PC-9 (cell line): ENCODE measurements at regions of chr18 and their contacts with region 1.

Region 1: DNA sequence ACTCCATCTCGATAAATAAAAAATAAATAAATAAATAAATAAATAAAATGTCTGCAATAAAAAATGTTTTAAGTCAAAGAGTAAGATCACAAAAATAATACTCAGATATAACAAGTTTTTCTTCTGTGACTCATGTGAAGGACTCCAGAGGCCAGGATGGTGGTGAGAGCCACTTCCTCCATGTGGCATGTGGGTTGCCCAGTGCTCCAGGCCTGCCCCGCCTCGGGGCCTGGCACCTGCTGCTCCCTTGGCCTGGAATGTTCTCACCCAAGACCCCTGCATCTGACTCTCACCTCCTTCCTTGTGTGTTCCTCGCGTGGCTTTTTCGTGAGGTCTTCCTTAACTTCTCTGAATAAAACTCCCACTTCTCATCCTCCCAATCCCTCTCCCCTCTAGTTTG is 77.4 kb upstream of the LDLRAD4 start:
- DNase-seq: no peak
- H3K4me3 ChIP-seq: no peak overlapping the region
- H3K27ac ChIP-seq: no peak overlapping the region
- H3K4me1 ChIP-seq: 0 out of 2 replicates have a peak, but pooled peaks cover 14% of the 10 kb centered on the region
- H3K27me3 ChIP-seq: peaks cover 28% of the 10 kb centered on the region
- CTCF ChIP-seq: no peak

Region 2: DNA sequence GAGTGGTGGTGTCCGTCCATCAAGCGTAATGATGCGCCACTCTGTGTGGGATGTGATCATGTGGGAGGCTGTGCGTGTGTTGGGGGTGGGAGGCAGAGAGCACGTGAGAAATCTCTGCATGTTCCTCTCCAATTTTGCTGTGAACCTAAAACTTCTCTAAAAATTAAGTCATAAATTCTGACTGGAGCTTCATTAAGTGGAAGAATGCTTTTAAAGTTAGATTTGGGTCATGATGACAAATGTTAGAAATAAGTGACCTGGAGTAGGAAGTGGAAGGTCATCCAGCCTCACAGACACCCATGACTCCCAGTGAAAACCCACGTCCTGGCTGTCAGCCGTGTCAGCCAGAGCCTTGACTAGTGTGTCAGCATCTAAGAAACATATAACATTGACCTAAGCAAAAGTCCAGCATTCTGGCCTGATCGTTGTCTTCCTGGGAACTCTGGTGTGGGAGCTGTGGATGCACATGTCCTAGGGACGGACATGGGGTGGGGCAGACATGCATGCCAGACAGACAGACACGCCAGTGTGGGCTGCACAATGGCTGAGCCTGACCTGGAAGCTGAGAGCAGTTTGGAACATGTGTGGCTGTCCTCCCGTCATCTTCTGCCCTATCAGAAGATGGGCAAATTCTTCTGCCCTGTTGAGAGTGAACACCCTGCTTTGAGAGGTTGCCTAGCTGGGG is 339.5 kb after region 1 on chr18:
- CTCF ChIA-PET with region 1: no interaction called
- POLR2A ChIA-PET with region 1: interaction called, 13 read pairs
- intact Hi-C with region 1: no loop called
- DNase-seq: no peak
- H3K4me3 ChIP-seq: no peak overlapping the region
- H3K27ac ChIP-seq: no peak overlapping the region
- H3K4me1 ChIP-seq: no peaks in the 10 kb centered on the region
- H3K27me3 ChIP-seq: peaks cover 93% of the 10 kb centered on the region
- CTCF ChIP-seq: no peak